ENCODE measurements at regions of chr6 and their contacts with region 1.

Region 1: DNA sequence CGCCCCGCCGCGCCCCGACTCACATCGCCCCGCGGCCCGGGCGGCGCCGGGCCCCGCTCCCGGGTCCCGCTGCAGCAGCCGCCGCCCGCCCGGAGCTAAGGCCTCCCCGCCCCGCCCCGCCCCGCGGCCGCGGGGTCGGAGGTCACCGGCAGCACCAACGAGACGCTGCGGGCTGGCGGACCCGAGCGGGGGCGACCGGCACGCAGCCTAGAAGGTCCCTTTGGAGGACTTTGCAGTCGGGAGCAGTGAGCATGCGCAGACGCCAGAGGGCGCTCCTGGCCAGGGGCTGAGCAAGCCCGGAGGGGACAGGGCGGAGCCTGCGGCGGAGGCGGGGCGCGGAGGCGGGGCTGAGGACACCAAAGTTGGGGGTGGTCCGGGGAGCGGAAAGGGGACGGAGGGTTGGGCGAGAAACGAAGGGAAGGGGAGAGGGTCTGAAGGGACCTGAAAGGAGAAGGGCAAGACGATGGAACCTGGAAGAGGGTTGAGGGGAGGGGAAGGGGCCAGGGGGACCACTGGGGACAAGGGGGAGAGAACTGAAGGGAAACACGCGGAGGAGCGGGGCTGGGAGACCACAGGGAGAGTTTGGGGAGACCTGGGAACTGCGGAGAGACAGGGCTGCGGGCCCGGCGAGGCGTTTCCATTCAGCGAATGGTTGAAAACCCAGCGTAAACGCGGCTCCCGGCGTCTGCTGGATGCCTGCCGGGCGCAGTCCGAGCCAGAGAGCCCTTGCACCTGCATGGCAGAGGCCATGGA is at the start of gene FRS3:
- DNase-seq: peak; percentile 98
- ATAC-seq: peak; percentile 92 to 96
- total RNA-seq, gene FRS3: 4.0 to 5.2 TPM

Region 2: DNA sequence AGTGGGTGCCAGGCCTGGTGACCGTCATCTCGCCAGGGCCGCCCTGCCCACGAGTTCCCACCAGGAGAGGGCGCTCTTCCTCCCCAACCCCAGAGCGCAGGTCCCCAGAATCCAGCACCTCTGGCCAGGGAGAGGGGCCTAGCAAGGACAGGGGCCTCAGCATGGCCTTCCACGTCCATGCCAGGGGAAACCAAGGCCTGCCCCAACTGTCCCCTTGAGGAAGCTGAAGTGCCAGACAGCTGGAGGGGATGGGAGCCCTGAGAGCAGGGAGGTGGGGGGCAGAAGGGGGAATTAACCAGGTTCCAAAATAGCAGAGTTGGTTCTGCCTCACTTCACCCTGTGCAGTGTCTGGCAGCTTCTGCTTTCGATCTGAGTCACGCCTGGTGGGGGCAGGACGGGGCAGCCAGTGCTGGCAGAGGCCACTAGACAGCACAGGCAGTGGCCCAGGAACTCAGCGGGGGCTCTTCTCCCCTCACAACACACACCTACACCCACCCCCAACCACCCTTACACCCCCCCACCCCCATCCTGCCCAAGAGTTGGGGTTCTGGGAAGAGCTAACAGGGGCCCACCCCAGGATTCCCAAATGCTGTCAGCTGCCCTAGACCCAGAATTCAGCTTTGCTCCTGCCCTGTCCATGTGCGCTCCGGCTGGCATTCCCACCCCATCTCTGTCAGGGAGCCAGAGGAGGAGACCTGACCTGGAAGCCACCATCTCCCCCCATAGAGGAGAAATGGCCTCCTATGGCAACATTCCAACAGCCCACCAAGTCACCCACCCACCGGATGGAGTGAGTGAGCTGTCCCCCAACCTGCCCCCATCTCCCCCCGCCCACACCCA is 73.8 kb before region 1 on chr6:
- intact Hi-C with region 1: loop called in 1 of 2 experiments (anchors 10 kb)
- DNase-seq: peak; percentile 85
- ATAC-seq: peak; percentile 89 to 91

Region 3: GRCh38 chr6:42745707-42746462 is 965.9 kb after region 1 on chr6 and contains the start of gene TBCC:
- intact Hi-C with region 1: no loop called
- DNase-seq: peak; percentile 95
- ATAC-seq: peak; percentile 89 to 91
- total RNA-seq, gene TBCC: 12.2 to 13.0 TPM